CD8-positive, alpha-beta T cell (primary cell): ENCODE measurements at regions of chr20 and their contacts with region 1.

Region 1: DNA sequence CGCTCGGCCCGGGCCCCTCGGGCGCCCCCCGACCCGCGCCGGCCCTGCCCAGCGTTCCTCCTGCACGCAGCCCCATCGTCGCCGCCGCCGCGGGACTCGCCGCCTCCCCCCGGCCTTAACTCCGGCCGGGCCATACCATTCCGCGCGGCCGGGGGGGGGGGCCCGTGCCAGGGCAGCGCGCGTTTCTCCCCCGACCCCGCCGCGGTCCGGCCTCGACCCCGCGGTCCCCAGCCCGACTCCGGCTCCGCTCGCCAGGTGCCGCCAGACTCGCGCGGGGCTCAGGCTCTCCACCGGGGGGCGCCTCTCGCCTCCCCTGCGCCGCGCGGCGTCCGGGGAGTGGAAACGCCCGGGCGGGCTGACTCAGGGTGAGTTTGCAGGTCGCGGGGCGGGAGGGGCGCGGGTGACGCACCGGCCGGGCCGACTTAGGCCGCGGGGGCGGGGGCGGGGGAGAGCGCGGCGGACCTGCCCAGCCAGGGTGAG is at the start of gene SRXN1:
- DNase-seq: peak; percentile 49 to 88 (median 77)
- ATAC-seq: peak; percentile 92
- H3K4me3 ChIP-seq: peak within 1 kb of the TSS; percentile 59 to 74
- H3K4me3 Mint-ChIP-seq: peak within 1 kb of the TSS; percentile 77
- H3K27ac ChIP-seq: peak within 1 kb of the TSS; percentile 9 to 69
- H3K27ac Mint-ChIP-seq: peak within 1 kb of the TSS; percentile 69
- H3K4me1 ChIP-seq: peaks cover 15% of the 10 kb centered on the region
- H3K4me1 Mint-ChIP-seq: peaks cover 23% of the 10 kb centered on the region
- H3K27me3 ChIP-seq: no peaks in the 10 kb centered on the region
- H3K27me3 Mint-ChIP-seq: peaks cover 13% of the 10 kb centered on the region
- CTCF ChIP-seq: peak; percentile 70
- total RNA-seq, gene SRXN1: 1.3 to 1.7 TPM

Region 2: GRCh38 chr20:667391-667964 is 14.3 kb after region 1 on chr20:
- CTCF ChIA-PET with region 1: interaction called, 6 read pairs
- POLR2A ChIA-PET with region 1: no interaction called
- intact Hi-C with region 1: loop called in 1 of 2 experiments (anchors 2 kb)
- DNase-seq: peak; percentile 24 to 71 (median 59)
- ATAC-seq: no peak
- H3K4me3 ChIP-seq: no peak overlapping the region
- H3K4me3 Mint-ChIP-seq: no peak overlapping the region
- H3K27ac ChIP-seq: no peak overlapping the region
- H3K27ac Mint-ChIP-seq: no peak overlapping the region
- H3K4me1 ChIP-seq: no peaks in the 10 kb centered on the region
- H3K4me1 Mint-ChIP-seq: peaks cover 3% of the 10 kb centered on the region
- H3K27me3 ChIP-seq: peaks cover 0 to 11% of the 10 kb centered on the region in 2 experiments
- H3K27me3 Mint-ChIP-seq: peaks cover 52% of the 10 kb centered on the region
- CTCF ChIP-seq: peak; percentile 64

Region 3: GRCh38 chr20:739736-740135 is 86.6 kb after region 1 on chr20:
- CTCF ChIA-PET with region 1: interaction called, 3 read pairs
- POLR2A ChIA-PET with region 1: no interaction called
- intact Hi-C with region 1: loop called in 1 of 2 experiments (anchors 2 kb)
- DNase-seq: no peak
- ATAC-seq: no peak
- H3K4me3 ChIP-seq: no peak overlapping the region
- H3K4me3 Mint-ChIP-seq: no peak overlapping the region
- H3K27ac ChIP-seq: no peak overlapping the region
- H3K27ac Mint-ChIP-seq: no peak overlapping the region
- H3K4me1 ChIP-seq: no peaks in the 10 kb centered on the region
- H3K4me1 Mint-ChIP-seq: no peaks in the 10 kb centered on the region
- H3K27me3 ChIP-seq: peaks cover 0 to 2% of the 10 kb centered on the region in 2 experiments
- H3K27me3 Mint-ChIP-seq: peaks cover 23% of the 10 kb centered on the region
- CTCF ChIP-seq: no peak

Region 4: GRCh38 chr20:787825-788224 is 134.7 kb after region 1 on chr20:
- CTCF ChIA-PET with region 1: no interaction called
- POLR2A ChIA-PET with region 1: no interaction called
- intact Hi-C with region 1: no loop called
- DNase-seq: no peak
- ATAC-seq: no peak
- H3K4me3 ChIP-seq: no peak overlapping the region
- H3K4me3 Mint-ChIP-seq: no peak overlapping the region
- H3K27ac ChIP-seq: no peak overlapping the region
- H3K27ac Mint-ChIP-seq: no peak overlapping the region
- H3K4me1 ChIP-seq: no peaks in the 10 kb centered on the region
- H3K4me1 Mint-ChIP-seq: no peaks in the 10 kb centered on the region
- H3K27me3 ChIP-seq: no peaks in the 10 kb centered on the region
- H3K27me3 Mint-ChIP-seq: peaks cover 27% of the 10 kb centered on the region
- CTCF ChIP-seq: no peak